GM12878 (cell line): ENCODE measurements at regions of chr5 and their contacts with region 1.

Region 1: DNA sequence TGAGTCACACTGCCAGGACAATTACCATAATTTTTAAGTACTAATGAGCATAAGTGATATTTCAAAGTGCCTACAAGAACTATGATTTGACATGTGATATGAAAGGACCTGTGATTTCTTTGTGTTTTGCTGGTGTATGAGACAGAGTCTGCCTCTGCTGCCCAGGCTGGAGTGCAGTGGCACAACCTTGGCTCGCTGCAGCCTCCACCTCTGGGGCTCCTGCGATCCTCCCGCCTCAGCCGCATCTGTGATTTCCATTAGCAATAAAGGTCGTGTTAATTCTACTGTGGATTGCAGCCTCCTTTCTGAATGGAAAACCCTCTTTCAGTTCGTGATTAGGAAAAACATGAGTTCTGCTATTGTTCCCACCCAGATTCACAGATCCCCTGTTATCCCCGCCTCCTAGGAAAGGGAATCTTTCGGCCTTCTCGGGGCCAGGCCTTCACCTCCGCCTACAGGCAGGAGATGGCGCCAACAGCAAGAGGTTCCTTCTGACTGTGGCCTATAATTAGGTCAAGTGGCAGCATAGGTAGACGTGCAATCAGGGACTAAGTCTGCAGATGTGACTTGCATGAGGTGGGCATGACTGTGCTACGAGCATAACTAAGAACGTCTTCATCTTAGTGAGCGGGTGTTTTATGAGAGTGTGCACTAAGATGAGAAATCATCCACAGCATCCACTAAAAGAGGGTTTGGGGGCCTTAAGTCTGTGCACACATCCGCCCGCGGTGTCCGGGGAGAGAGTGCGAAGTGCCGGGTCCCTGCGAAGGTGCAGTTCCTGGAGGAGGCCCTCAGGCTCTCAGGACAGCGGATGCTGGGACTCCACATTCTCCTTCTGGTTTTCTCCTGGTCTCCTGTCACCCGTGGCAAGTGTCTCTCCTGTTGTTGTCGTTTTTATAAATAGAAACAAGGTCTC is 23.1 kb downstream of the TRIM7 start:
- DNase-seq: no peak
- ATAC-seq: peak; percentile 79
- H3K4me3 ChIP-seq: no peak overlapping the region
- H3K27ac ChIP-seq: no peak overlapping the region
- H3K4me1 ChIP-seq: peaks cover 11% of the 10 kb centered on the region
- H3K27me3 ChIP-seq: no peaks in the 10 kb centered on the region
- CTCF ChIP-seq: peak; percentile 79 to 85 (median 84)
- EP300 ChIP-seq: no peak; a peak in 1 of 4 replicates
- POLR2A ChIP-seq: no peak
- RAD21 ChIP-seq: peak; percentile 89

Region 2: DNA sequence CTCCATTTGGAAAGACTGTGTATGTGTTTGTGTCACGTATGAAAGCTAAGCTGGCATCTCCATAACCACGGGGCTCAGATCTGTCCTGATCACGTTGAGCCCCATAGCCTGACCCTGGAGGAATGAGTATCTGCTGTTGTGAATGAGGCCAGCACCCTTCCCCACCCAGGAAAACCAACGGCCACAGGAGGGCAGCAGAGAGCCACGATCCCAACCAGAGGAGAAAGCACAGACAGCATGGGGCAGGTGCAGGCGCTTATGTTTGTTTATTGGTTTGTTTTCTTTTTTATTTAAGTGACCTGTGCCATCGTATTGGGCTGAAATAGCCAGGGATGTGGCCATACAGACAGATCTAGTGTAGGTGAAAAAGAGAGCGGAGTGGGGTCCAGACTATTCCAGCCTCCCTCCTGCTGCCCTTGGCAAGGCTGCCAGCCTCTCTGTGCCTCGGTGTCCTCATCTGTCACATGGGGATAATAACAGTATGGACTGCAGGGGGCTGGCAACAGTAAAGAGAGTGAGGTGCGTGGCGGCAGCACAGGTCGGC is 22.6 kb before region 1 on chr5:
- CTCF ChIA-PET with region 1: interaction called, 10 read pairs
- POLR2A ChIA-PET with region 1: no interaction called
- RAD21 ChIA-PET with region 1: interaction called, 7 read pairs
- SMC1A ChIA-PET with region 1: interaction called, 5 read pairs
- in situ Hi-C with region 1: no loop called
- intact Hi-C with region 1: no loop called
- DNase-seq: no peak
- ATAC-seq: peak; percentile 89
- H3K4me3 ChIP-seq: no peak overlapping the region
- H3K27ac ChIP-seq: no peak overlapping the region
- H3K4me1 ChIP-seq: peaks cover 25% of the 10 kb centered on the region
- H3K27me3 ChIP-seq: no peaks in the 10 kb centered on the region
- CTCF ChIP-seq: peak; percentile 86 to 97 (median 88)
- EP300 ChIP-seq: no peak
- POLR2A ChIP-seq: no peak
- RAD21 ChIP-seq: peak; percentile 95

Region 3: DNA sequence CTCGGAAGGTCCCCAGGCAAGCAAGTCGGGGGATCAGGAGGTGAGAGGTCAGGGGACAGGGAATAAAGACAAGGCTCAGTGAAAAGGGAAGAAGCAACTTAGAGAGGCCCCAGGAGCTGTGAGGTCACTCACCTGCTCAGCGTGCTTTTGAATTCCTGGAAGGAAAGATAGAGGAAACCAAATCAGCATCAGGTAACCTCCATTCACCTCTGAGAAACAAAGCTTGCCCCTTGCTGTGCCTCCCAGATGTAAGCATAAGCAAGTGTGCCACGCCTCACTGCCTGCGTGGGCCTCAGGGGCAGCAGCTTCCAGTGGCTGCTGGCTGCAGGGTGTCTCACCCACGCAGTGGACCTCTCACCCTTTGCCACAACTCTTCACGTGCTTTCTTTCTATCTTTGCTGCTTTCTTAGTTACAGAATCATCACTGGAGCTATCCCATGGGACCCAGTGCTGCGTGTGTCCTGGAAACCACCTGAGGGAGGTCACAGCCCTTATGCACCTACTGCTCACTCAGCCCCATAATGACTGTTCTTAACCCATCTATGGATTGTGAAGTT is 17.1 kb after region 1 on chr5:
- CTCF ChIA-PET with region 1: interaction called, 9 read pairs
- POLR2A ChIA-PET with region 1: interaction called, 18 read pairs
- RAD21 ChIA-PET with region 1: interaction called, 8 read pairs
- SMC1A ChIA-PET with region 1: interaction called, 15 read pairs
- in situ Hi-C with region 1: no loop called
- intact Hi-C with region 1: no loop called
- DNase-seq: no peak
- ATAC-seq: peak; percentile 88
- H3K4me3 ChIP-seq: no peak overlapping the region
- H3K27ac ChIP-seq: no peak overlapping the region; the same call in 1 of the 2 replicates
- H3K4me1 ChIP-seq: peaks cover 19% of the 10 kb centered on the region
- H3K27me3 ChIP-seq: peaks cover 1 to 4% of the 10 kb centered on the region in 2 experiments; a peak in 2 of 4 replicates
- CTCF ChIP-seq: no peak
- EP300 ChIP-seq: peak; percentile 67 to 84; a peak in 3 of 4 replicates
- POLR2A ChIP-seq: no peak
- RAD21 ChIP-seq: no peak

Region 4: GRCh38 chr5:181223058-181223728 is 41.3 kb after region 1 on chr5 and contains the start of gene TRIM41:
- CTCF ChIA-PET with region 1: interaction called, 12 read pairs
- POLR2A ChIA-PET with region 1: interaction called, 8 read pairs
- RAD21 ChIA-PET with region 1: interaction called, 25 read pairs
- SMC1A ChIA-PET with region 1: interaction called, 5 read pairs
- in situ Hi-C with region 1: no loop called
- intact Hi-C with region 1: no loop called
- DNase-seq: peak; percentile 94
- ATAC-seq: peak; percentile 77
- H3K4me3 ChIP-seq: peak within 1 kb of the TSS; percentile 98
- H3K27ac ChIP-seq: peak within 1 kb of the TSS; percentile 95
- H3K4me1 ChIP-seq: peaks cover 20% of the 10 kb centered on the region
- H3K27me3 ChIP-seq: no peaks in the 10 kb centered on the region
- CTCF ChIP-seq: peak in 1 of 3 experiments; percentile 12; a peak in 1 of 6 replicates
- EP300 ChIP-seq: no peak
- POLR2A ChIP-seq: peak; percentile 98
- RAD21 ChIP-seq: no peak
- polyA plus RNA-seq, gene TRIM41: 1.0 to 3.2 TPM

Region 5: GRCh38 chr5:181260387-181261319 is 78.7 kb after region 1 on chr5 and contains the start of gene TRIM52:
- CTCF ChIA-PET with region 1: interaction called, 4 read pairs
- POLR2A ChIA-PET with region 1: interaction called, 5 read pairs
- RAD21 ChIA-PET with region 1: interaction called, 6 read pairs
- SMC1A ChIA-PET with region 1: interaction called, 4 read pairs
- in situ Hi-C with region 1: loop called (anchors 10 kb)
- intact Hi-C with region 1: no loop called
- DNase-seq: peak; percentile 77
- ATAC-seq: peak; percentile 92
- H3K4me3 ChIP-seq: peak within 1 kb of the TSS; percentile 95
- H3K27ac ChIP-seq: peak within 1 kb of the TSS; percentile 97
- H3K4me1 ChIP-seq: peaks cover 3% of the 10 kb centered on the region; the same call in 1 of the 2 replicates
- H3K27me3 ChIP-seq: no peaks in the 10 kb centered on the region
- CTCF ChIP-seq: peak in 1 of 3 experiments; percentile 19; a peak in 1 of 6 replicates
- EP300 ChIP-seq: no peak
- POLR2A ChIP-seq: peak; percentile 99
- RAD21 ChIP-seq: no peak
- polyA plus RNA-seq, gene TRIM52: 1.4 to 3.4 TPM